Transverse colon (tissue), 4 donors: ENCODE measurements at regions of chr5 and their contacts with region 1.

Region 1: GRCh38 chr5:7754992-7755596 is 95.8 kb downstream of the CFAP90 start:
- DNase-seq: peak; percentile 55
- H3K4me3 ChIP-seq: no peak overlapping the region
- H3K27ac ChIP-seq: no peak overlapping the region
- H3K4me1 ChIP-seq: no peaks in the 10 kb centered on the region
- H3K27me3 ChIP-seq: no peaks in the 10 kb centered on the region
- CTCF ChIP-seq: peak; percentile 45 to 70 (median 60)
- EP300 ChIP-seq: no peak
- POLR2A ChIP-seq: no peak

Region 2: GRCh38 chr5:7251132-7251531 is 504.0 kb before region 1 on chr5:
- in situ Hi-C with region 1: loop called in 3 of 4 experiments (anchors 10 to 25 kb)
- intact Hi-C with region 1: no loop called
- DNase-seq: no peak
- H3K4me3 ChIP-seq: no peak overlapping the region
- H3K27ac ChIP-seq: peak overlapping the region in 1 of 4 donors; percentile 4
- H3K4me1 ChIP-seq: no peaks in the 10 kb centered on the region
- H3K27me3 ChIP-seq: no peaks in the 10 kb centered on the region
- CTCF ChIP-seq: no peak
- EP300 ChIP-seq: no peak
- POLR2A ChIP-seq: no peak

Region 3: DNA sequence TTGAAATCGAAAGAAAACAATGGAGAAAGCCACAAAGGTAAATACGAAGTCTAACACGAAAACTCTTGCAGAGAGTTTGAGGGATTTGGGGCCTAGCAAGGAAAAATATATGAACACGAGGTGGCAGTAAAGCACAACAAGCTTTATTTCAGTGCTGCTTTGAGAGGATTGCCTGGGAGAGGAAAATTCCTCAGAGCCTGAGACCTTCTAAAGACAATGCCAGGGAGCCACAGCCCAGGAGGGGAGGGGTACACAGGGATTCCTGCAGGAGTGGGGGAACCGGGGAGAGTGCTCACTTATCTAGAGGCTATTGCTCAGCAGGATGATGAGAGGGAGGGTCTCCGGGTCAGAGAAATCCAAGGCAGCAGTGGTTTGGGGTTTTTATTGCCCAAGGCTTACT is 494.0 kb before region 1 on chr5:
- in situ Hi-C with region 1: loop called in 3 of 4 experiments (anchors 10 to 25 kb)
- intact Hi-C with region 1: no loop called
- DNase-seq: no peak
- H3K4me3 ChIP-seq: no peak overlapping the region
- H3K27ac ChIP-seq: no peak overlapping the region
- H3K4me1 ChIP-seq: no peaks in the 10 kb centered on the region
- H3K27me3 ChIP-seq: no peaks in the 10 kb centered on the region
- CTCF ChIP-seq: peak; percentile 44 to 60 (median 50)
- EP300 ChIP-seq: no peak
- POLR2A ChIP-seq: no peak

Region 4: GRCh38 chr5:7458601-7459000 is 296.5 kb before region 1 on chr5:
- in situ Hi-C with region 1: no loop called
- intact Hi-C with region 1: no loop called
- DNase-seq: no peak
- H3K4me3 ChIP-seq: no peak overlapping the region
- H3K27ac ChIP-seq: no peak overlapping the region
- H3K4me1 ChIP-seq: no peaks in the 10 kb centered on the region
- H3K27me3 ChIP-seq: no peaks in the 10 kb centered on the region
- CTCF ChIP-seq: no peak
- EP300 ChIP-seq: no peak
- POLR2A ChIP-seq: no peak